MCF 10A (cell line): ENCODE measurements at regions of chr13 and their contacts with region 1.

Region 1: DNA sequence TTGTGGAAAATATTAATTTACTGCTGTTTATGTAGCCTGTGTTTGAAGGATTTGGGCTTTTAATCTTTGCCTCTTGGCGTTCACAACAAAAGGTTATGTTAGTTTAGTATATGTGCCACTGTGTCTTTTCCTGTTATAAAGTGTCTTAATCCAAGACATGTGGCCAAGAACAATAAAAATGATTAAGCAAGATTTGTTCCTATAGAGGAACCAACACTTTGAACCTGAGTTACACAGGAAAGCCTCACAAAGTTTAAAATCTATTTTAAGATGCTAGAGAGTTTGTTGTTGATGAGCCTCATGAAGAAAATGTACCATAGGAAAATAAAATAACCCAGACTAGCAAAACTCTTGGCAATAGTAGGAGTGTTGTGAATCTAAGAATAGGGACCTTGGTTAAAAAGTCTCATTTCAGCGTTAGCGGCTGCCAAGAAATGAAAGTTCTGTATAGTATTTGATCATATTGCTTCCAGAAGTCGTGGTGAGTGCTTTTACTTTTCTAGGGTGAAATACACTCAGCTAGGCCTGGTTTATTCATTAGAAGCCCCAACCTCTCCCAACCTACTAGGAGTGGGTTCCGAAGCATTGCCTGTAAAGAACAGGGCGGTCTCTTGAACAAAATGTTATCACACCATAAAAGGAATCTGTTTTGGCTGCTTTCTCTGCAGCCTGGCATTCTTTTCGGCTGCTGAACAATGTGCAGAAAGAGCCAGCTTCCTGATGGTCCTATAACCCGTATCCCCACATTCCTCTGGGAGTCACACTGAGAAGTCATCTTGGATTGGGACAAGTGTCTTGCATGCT is 102.6 kb downstream of the LRCH1 start:
- DNase-seq: peak; percentile 65
- H3K4me3 Mint-ChIP-seq: peak overlapping the region; percentile 52
- H3K27ac Mint-ChIP-seq: peak overlapping the region; percentile 79
- H3K4me1 Mint-ChIP-seq: peaks cover 17% of the 10 kb centered on the region
- H3K27me3 Mint-ChIP-seq: no peaks in the 10 kb centered on the region
- CTCF ChIP-seq: no peak

Region 2: DNA sequence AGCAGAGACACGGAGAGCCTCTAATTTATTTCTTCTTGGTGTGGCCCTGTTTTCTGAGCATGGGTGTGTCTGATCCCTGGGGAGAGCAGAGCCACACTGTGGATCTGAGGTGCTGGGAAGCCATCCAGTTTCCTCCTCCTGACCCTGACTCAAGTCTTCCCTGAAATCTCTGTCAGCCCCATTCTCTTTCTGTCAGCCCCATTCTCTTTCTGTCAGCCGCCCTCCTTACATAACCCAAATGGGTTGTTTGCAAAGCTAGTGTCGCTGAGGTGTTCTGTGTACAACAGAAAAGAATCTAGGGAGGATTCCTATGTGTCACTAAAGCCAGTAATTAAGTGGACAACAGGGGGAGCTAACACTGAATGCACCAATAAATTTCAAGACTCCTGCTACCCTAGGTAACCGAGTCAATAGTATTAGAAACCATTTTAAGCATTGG is 52.4 kb before region 1 on chr13:
- CTCF ChIA-PET with region 1: interaction called, 3 read pairs
- POLR2A ChIA-PET with region 1: interaction called, 5 read pairs
- intact Hi-C with region 1: loop called (anchors 5 kb)
- DNase-seq: peak; percentile 29
- H3K4me3 Mint-ChIP-seq: no peak overlapping the region
- H3K27ac Mint-ChIP-seq: peak overlapping the region; percentile 75
- H3K4me1 Mint-ChIP-seq: peaks cover 46% of the 10 kb centered on the region
- H3K27me3 Mint-ChIP-seq: no peaks in the 10 kb centered on the region
- CTCF ChIP-seq: no peak

Region 3: DNA sequence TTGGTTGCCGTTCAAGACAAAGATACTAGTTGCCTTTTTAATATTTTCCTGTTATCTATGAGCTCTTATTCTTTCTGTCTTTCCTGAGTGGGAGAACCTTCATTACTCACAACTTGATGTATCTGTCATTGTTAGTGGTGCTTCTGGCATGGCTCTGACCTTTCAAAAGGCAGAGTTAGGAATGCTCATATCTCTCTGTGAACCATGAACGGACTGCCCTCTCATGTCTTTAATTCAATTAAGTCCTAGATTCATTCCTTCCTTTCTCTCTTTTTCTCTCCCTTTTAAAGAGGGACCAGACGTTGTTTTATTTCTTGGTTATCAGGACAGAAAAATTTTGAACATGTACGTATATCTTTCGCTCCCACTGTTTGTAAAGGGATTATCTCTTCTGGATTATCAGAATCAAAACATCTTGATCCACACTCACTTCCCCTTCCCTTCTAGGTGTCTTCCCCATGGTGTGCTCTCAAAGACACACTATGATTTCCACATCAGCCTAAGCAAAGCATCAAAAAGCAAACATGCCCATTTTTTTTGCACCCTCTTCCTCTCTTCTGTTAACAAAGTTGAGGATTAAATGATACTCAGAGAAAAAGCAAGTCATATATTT is 12.3 kb before region 1 on chr13:
- CTCF ChIA-PET with region 1: interaction called, 6 read pairs
- POLR2A ChIA-PET with region 1: interaction called, 13 read pairs
- intact Hi-C with region 1: no loop called
- DNase-seq: no peak
- H3K4me3 Mint-ChIP-seq: no peak overlapping the region
- H3K27ac Mint-ChIP-seq: peak overlapping the region; percentile 9
- H3K4me1 Mint-ChIP-seq: peaks cover 31% of the 10 kb centered on the region
- H3K27me3 Mint-ChIP-seq: no peaks in the 10 kb centered on the region
- CTCF ChIP-seq: no peak